Sigmoid colon (tissue), 7 donors: ENCODE measurements at regions of chr17 and their contacts with region 1.

Region 1: DNA sequence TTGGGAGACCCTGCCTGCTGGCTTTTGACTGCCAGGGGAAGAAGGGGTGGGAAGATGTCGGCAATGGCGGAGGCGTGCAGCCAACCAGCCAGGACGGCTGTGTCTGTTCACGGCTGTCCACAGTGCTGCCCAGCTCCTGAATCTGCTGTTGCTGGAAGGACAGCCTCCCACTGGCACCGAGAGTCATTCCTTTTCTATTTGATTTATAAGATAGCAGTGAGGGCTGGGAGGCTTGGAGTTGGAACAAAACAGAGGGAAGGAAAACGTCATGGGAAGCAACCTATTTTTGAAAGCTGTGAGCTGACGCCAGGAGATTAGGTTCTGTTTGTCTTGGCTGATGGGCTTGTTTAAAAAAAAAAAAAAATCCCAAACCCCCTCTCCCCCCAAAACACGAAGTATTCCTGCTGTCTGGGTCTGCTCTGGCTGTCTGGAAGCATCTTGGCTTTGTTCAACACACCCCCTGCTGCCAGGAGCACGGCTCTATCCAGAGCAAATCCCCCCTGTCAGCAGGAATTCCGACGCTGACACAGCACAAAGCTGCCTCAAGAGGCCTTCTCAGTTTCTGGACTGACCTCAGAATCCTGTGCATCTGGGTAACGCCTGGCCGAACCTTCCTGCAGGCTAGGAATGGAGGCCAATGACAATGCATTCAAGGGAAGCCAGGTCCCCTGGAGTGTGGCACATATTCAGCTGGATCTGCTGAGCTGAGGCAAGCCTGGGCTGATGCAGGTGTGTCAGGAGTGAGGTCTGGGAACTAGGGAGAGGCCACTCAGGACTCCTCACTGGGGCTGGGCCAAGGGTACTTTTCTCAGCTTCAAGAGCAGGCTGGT is 41.0 kb upstream of the SREBF1 start:
- DNase-seq: peak; percentile 96
- H3K4me3 ChIP-seq: no peak overlapping the region
- H3K27ac ChIP-seq: peak overlapping the region; percentile 85 to 92 (median 88)
- H3K4me1 ChIP-seq: peaks cover 0 to 70% (median 50%) of the 10 kb centered on the region in 4 donors
- H3K27me3 ChIP-seq: no peaks in the 10 kb centered on the region
- CTCF ChIP-seq: peak in 1 of 4 experiments; percentile 9
- EP300 ChIP-seq: peak in 3 of 4 donors; percentile 53 to 75 (median 62)
- POLR2A ChIP-seq: no peak

Region 2: DNA sequence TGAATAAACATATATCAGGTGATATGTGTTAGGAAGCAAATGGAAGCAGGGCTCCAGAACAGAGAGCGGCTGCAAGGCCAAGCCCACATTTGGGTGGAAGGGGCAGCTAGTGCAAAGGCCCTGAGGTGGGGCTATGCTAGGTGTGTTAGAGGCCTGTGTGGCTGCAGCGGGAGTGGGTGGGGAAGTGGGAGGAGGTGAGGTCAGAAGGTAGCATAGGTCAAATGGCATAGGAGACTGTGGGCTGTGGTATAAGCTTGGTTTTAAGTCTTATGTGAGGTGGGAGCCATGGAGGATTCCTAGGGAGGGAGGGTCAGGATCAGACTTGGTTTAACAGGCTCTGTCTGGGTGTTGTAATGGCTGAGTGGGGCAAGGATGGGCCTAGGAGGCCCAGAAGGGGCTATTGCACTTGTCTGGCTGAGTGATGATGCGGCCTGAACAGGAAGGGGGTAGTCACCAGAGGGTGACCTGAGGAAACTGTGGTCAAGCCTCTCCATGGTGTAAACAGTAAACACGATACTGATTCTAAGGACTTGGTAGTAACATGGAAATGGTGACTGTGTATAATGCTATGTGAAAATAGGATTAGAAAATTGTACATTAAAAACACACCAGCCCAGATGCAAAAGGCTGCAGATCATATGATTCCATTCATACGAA is 165.3 kb before region 1 on chr17:
- intact Hi-C with region 1: no loop called
- DNase-seq: no peak
- H3K4me3 ChIP-seq: no peak overlapping the region
- H3K27ac ChIP-seq: peak overlapping the region; percentile 84 to 88 (median 86)
- H3K4me1 ChIP-seq: peaks cover 0 to 64% (median 57%) of the 10 kb centered on the region in 4 donors
- H3K27me3 ChIP-seq: no peaks in the 10 kb centered on the region
- CTCF ChIP-seq: no peak
- EP300 ChIP-seq: no peak
- POLR2A ChIP-seq: no peak

Region 3: DNA sequence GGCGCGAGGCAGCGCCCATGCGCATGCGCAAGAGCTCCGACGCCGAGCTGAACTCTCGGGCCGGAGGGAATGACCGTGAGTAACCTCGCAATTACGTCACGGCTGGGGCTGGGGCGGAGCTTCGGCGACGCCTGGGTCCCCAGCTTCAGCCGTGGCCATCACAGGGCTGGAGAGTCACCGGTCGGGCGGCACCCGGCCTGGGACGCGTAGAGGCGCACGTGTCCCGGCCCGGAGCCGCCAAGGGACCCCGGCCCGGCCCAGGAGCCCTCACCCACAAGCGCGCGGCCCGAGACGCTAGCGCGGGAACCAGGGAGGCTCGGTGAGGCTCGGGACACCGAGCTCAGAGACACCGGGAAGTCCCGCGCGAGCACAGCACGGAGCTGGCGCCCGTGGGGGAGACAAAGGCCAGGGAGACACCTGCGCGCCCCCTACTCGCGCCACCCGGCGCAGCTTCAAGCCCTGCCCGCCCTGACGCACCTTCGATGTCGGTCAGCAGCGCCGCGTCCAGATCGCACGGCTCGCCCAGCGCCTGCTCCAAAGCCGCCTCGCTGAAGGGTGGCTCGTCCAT is 41.4 kb before region 1 on chr17:
- intact Hi-C with region 1: no loop called
- DNase-seq: peak; percentile 99
- H3K4me3 ChIP-seq: peak overlapping the region; percentile 84 to 95 (median 92)
- H3K27ac ChIP-seq: peak overlapping the region; percentile 99 to 100 (median 100)
- H3K4me1 ChIP-seq: peaks cover 0 to 84% (median 80%) of the 10 kb centered on the region in 4 donors
- H3K27me3 ChIP-seq: no peaks in the 10 kb centered on the region
- CTCF ChIP-seq: no peak
- EP300 ChIP-seq: peak in 2 of 4 donors; percentile 33 to 88
- POLR2A ChIP-seq: peak; percentile 94 to 99

Region 4: GRCh38 chr17:18038861-18039534 is 161.3 kb after region 1 on chr17 and contains the starts of genes ATPAF2 and GID4:
- intact Hi-C with region 1: loop called (anchors 5 kb)
- DNase-seq: peak; percentile 100
- H3K4me3 ChIP-seq: peak within 1 kb of the TSS; percentile 80 to 96 (median 87)
- H3K27ac ChIP-seq: peak within 1 kb of the TSS; percentile 84 to 91 (median 89)
- H3K4me1 ChIP-seq: peaks cover 0 to 45% (median 37%) of the 10 kb centered on the region in 4 donors
- H3K27me3 ChIP-seq: no peaks in the 10 kb centered on the region
- CTCF ChIP-seq: no peak
- EP300 ChIP-seq: no peak
- POLR2A ChIP-seq: no peak
- total RNA-seq, gene ATPAF2: 10.3 to 28.8 (median 15.3) TPM
- total RNA-seq, gene GID4: 20.0 to 25.2 (median 23.9) TPM